Heart left ventricle (tissue), 16 donors: ENCODE measurements at regions of chr4 and their contacts with region 1.

Region 1: GRCh38 chr4:51842554-51843308 is at the start of gene DCUN1D4:
- DNase-seq: peak; percentile 100
- ATAC-seq: peak; percentile 93 to 98 (median 96)
- H3K4me3 ChIP-seq: peak within 1 kb of the TSS; percentile 68 to 95 (median 88)
- H3K27ac ChIP-seq: peak within 1 kb of the TSS; percentile 76 to 99 (median 93)
- H3K4me1 ChIP-seq: peaks cover 0 to 24% (median 11%) of the 10 kb centered on the region in 12 donors
- H3K27me3 ChIP-seq: no peaks in the 10 kb centered on the region
- CTCF ChIP-seq: peak; percentile 24 to 72 (median 46)
- POLR2A ChIP-seq: peak; percentile 31 to 71
- total RNA-seq, gene DCUN1D4: 16.6 to 54.0 (median 38.1) TPM

Region 2: DNA sequence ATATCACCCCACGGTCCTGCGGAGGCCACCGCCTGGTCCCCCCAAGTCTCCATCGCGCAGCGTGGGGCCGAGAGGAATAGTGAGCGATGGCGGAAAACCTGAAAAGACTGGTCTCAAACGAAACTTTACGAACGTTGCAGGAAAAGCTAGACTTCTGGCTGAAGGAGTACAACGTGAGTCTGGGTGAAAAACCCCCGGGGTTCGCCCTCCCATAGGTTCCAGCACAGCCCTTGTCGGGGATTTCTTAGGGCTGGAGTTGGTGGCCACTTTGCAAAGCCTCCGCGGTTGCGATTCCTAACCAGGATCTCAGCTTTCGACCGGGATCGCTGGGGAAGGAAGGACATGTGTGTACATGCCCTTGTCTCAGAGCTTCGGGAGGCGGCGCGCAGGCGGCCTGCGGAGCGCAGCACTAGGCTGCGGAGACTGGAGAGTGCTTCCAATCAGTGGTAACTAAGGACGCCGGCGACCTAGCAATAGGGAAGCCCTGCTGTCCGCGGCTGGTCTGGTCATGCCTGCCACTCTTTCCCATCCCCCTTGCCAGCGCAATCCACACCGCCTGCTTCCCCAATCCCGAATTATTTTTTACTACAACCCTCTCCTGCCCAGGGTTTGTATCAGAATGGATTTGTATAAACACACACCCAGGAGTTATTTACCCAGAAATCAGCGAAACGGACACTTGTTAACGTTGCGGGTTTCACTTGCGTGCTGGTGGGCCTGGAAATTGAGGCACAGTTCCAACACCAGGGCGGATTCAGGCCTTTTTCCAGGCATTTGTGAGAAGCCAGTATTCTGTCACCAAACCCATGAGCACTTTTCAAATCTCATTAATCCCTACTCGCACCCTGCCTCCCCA is 209.1 kb after region 1 on chr4:
- intact Hi-C with region 1: loop called in 1 of 10 experiments (anchors 10 kb)
- DNase-seq: peak; percentile 68 to 86 (median 79)
- ATAC-seq: peak; percentile 85 to 97 (median 92)
- H3K4me3 ChIP-seq: peak overlapping the region; percentile 39 to 81 (median 64)
- H3K27ac ChIP-seq: peak overlapping the region; percentile 8 to 80 (median 52)
- H3K4me1 ChIP-seq: peaks cover 0 to 19% (median 7%) of the 10 kb centered on the region in 12 donors
- H3K27me3 ChIP-seq: peaks cover 0 to 57% (median 0%) of the 10 kb centered on the region in 9 donors
- CTCF ChIP-seq: no peak
- POLR2A ChIP-seq: no peak